Prostate gland (tissue), 2 donors: ENCODE measurements at regions of chr5 and their contacts with region 1.

Region 1: GRCh38 chr5:79514391-79515105 is 614 bp upstream of the HOMER1 start:
- DNase-seq: peak; percentile 90
- H3K4me3 ChIP-seq: peak overlapping the region; percentile 70 to 82
- H3K27ac ChIP-seq: peak overlapping the region; percentile 95 to 98
- H3K4me1 ChIP-seq: no peaks in the 10 kb centered on the region
- H3K27me3 ChIP-seq: no peaks in the 10 kb centered on the region
- CTCF ChIP-seq: peak in 2 of 4 experiments; percentile 12 to 29
- POLR2A ChIP-seq: peak; percentile 94

Region 2: GRCh38 chr5:79235634-79236363 is 278.7 kb before region 1 on chr5 and contains the start of gene JMY:
- intact Hi-C with region 1: loop called (anchors 10 kb)
- DNase-seq: peak; percentile 88
- H3K4me3 ChIP-seq: peak within 1 kb of the TSS; percentile 84 to 94
- H3K27ac ChIP-seq: peak within 1 kb of the TSS; percentile 98
- H3K4me1 ChIP-seq: peaks cover 4% of the 10 kb centered on the region
- H3K27me3 ChIP-seq: no peaks in the 10 kb centered on the region
- CTCF ChIP-seq: peak in 1 of 4 experiments; percentile 26
- POLR2A ChIP-seq: peak; percentile 91
- total RNA-seq, gene JMY: 19.8 to 25.7 TPM

Region 3: DNA sequence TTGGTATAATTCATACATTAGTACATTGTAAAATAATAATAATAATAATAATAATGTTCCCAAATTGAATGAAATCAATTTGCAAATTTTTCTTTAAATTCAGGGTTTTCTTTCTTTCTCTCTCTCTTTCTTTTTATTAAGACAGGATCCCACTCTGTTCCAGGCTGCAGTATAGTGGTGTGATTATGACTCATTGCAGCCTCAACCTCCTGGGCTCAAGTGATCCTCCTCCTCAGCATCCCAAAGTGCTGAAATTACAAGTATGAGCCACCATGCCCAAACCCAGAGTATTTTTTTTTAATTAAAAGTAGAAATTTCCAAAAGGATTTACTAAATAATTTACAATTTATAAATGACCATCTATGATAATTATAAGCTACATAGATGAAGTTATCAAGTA is 118.3 kb before region 1 on chr5:
- intact Hi-C with region 1: no loop called
- DNase-seq: no peak
- H3K4me3 ChIP-seq: no peak overlapping the region
- H3K27ac ChIP-seq: no peak overlapping the region
- H3K4me1 ChIP-seq: no peaks in the 10 kb centered on the region
- H3K27me3 ChIP-seq: no peaks in the 10 kb centered on the region
- CTCF ChIP-seq: no peak
- POLR2A ChIP-seq: no peak

Region 4: DNA sequence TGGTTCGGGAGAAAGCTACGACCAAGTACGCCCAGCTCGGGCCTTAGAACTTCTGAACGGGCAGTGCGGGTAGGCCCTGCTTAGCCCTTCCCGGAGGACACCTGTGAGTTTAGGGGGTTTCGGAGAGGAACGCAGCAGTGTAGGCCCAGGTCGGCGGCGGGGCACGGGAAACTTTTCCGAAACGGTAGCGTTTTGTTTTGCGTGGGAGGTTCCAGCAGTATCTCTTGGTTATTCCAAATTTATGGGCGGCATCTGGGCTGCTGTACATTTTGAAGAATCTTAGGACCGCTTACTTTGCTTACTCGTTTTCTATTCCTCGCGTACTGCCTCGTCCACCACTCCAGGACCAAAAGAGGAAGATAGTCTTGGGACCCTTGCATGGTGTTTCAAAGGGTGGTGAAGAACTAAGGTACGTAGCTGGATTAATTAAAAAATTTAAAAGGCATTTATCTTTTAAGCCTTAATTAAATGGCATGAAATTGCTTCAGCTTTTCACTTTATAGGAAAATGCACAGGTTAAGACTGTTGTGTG is 98.2 kb after region 1 on chr5:
- intact Hi-C with region 1: loop called (anchors 5 kb)
- DNase-seq: no peak
- H3K4me3 ChIP-seq: peak overlapping the region; percentile 68 to 76
- H3K27ac ChIP-seq: peak overlapping the region; percentile 83 to 89
- H3K4me1 ChIP-seq: no peaks in the 10 kb centered on the region
- H3K27me3 ChIP-seq: no peaks in the 10 kb centered on the region
- CTCF ChIP-seq: no peak
- POLR2A ChIP-seq: no peak

Region 5: GRCh38 chr5:80516826-80517225 is 1002.3 kb after region 1 on chr5:
- intact Hi-C with region 1: no loop called
- DNase-seq: no peak
- H3K4me3 ChIP-seq: no peak overlapping the region
- H3K27ac ChIP-seq: no peak overlapping the region
- H3K4me1 ChIP-seq: no peaks in the 10 kb centered on the region
- H3K27me3 ChIP-seq: no peaks in the 10 kb centered on the region
- CTCF ChIP-seq: no peak
- POLR2A ChIP-seq: no peak